GM10248 (cell line): ENCODE measurements at regions of chr13 and their contacts with region 1.

Region 1: DNA sequence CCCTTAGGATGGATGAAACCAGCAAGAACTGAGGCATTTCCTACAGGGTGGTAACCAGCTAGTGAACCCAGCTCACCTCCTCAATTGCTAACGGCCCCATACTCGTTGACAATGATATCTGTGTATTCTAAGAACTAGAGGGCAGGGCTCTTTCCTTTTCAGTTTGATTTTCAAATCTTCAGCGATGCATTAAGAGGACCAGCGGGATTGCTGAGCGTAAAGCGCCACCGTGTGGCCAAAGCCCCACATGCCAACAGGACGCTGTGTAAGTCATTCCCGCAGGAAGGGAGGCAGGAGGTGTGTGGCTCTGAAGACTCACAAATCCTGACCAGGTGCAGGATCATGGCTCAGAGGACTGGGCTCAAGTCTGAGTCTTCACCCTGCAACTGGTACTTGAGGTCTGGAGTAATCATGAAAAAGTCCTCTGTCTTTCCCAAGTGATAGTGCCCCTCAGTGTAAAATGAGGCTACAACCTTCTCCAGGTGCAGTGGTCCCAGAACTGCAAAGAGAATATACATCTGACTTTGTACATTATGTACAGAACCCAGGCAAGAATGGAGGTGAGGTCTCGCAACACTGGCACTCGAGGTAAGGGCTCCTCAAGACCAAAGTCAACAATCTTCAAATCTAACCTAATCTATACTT is 40.9 kb downstream of the C13orf42 start:
- DNase-seq: peak; percentile 71
- CTCF ChIP-seq: peak; percentile 99

Region 2: GRCh38 chr13:49976314-49977258 is 1093.5 kb before region 1 on chr13:
- CTCF ChIA-PET with region 1: interaction called, 24 read pairs
- POLR2A ChIA-PET with region 1: no interaction called
- DNase-seq: peak; percentile 74
- CTCF ChIP-seq: peak; percentile 78

Region 3: GRCh38 chr13:51044023-51044665 is 26.0 kb before region 1 on chr13:
- CTCF ChIA-PET with region 1: interaction called, 21 read pairs
- POLR2A ChIA-PET with region 1: no interaction called
- DNase-seq: no peak
- CTCF ChIP-seq: no peak

Region 4: GRCh38 chr13:51058461-51059167 is 11.5 kb before region 1 on chr13:
- CTCF ChIA-PET with region 1: interaction called, 21 read pairs
- POLR2A ChIA-PET with region 1: no interaction called
- DNase-seq: no peak
- CTCF ChIP-seq: no peak

Region 5: DNA sequence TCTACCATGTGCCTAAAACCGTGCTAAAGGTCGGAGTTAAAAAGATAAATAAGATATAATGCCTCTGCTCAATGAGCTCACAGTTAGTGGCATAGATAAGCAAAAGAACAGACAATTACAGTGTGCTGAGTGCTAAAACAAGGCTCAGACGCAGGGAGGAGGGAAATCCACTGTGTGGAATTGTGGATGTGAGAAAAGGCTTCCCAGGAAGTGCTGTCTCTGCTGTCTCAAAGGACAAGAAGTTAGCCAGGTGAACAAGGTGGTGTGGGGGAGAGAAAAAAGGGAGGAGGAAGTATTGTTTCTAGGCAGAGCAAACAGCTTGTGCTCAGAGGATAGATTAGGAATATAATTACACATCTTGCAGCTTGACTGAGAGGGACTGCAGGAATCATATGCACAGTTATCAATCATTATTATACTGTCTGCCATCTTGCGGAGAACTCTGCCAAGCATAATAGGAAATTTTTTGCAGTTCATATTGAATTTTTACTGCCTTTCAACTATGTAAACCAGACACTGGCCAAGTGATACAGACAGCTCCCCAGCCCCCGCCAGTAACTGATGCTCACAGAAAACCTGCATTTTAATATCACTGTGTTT is 31.6 kb after region 1 on chr13:
- CTCF ChIA-PET with region 1: no interaction called
- POLR2A ChIA-PET with region 1: no interaction called
- DNase-seq: no peak
- CTCF ChIP-seq: no peak

Region 6: DNA sequence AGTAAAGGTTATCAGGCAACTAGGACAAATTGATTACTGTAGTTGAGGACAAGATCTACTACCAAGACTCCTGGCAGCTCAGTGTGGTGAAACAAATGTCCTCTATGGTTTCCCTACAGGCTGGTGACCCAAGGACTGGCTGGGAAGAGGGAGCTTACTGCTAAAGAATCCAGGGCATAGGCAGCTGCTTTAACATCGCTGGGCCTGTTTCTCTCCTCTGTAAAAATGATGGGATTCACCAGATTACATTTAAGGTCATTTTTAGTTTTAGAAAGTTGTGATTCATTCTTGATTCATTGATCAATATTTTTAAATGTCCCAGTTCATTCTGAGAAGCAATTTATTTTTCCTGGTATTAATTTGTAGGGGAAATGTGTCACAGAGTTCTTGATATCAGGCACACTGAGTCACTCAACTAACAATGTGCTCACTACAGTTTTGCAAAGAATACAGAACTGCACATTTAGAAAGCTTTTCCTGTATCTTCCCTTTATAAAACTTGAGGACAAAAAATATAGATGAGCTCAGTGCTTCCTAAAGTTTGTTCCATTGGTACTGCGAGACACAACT is 132.4 kb after region 1 on chr13:
- CTCF ChIA-PET with region 1: no interaction called
- POLR2A ChIA-PET with region 1: no interaction called
- DNase-seq: no peak
- CTCF ChIP-seq: no peak